HCT116 (cell line): ENCODE measurements at regions of chr19 and their contacts with region 1.

Region 1: DNA sequence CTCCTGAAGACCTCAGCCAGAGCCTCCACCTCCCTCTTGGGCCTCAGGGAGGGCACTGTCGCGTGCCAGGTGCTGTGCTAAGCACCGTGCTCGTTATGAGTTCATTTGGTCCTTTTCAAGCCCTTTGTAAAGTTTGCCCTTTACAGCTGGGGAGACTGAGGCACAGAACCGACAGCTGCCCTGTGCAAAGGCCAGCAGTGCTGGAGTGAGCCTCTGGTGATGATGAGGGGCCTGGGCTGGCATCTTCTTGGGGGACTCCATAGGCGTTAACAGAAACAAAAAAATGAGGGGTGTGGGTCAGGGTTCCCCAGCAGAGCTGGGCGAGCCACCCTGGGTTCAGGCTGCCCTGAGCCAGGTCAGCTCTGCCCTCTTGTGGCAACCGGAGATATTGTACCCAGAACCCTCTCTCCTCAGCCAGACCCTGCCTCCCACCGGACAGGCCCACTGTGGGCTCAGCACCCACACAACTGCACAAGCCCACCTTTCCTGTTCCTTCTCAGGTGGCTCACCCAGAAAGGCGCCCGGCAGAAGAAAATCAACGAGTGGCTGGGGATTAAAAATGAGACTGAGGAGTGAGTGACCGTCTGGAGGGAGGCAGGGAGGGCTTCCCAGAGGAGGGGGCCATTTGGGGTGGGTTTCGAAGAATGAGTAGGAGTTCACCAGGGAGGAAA is 5.5 kb upstream of the IFI30 start:
- DNase-seq: no peak
- ATAC-seq: peak; percentile 91
- H3K4me3 ChIP-seq: no peak overlapping the region
- H3K27ac ChIP-seq: no peak overlapping the region
- H3K4me1 ChIP-seq: peaks cover 0 to 2% of the 10 kb centered on the region in 2 experiments; a peak in 2 of 4 replicates
- H3K27me3 ChIP-seq: no peaks in the 10 kb centered on the region
- CTCF ChIP-seq: peak; percentile 58 to 82 (median 75)
- POLR2A ChIP-seq: no peak
- RAD21 ChIP-seq: peak; percentile 75

Region 2: DNA sequence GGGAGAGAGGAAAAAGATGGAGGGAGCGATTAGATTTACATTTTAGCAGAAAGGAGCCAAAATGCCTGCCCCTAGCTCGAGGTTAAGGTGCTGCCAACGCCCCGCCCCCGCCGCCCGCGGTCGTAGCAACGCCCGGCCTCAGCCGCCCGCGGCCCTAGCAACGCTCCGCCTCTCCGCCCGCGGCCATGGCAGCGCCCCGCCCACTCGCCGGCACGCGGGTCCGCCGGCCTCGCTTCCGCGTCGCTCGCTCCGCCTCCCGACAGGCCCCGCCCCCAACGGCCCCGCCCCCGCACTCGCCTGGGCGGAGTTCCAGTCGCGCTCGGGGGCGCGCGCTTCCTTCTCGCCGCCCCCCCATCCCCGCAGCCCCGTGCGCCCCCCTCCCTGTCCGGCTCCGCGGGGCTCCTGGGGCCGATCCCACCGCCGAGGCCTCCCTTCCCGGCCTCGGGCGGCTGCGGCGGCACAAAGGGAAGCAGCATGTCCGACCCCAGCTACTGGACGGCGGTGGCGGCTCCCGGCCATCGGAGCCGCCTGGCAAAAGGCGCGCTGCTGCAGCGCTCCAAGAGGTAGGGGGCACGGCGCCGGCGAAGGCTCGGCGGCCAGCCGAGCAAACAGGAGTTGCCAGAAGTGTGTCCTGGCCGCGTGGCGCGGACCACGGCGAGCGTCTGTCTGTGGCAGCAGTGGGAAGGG is 50.3 kb before region 1 on chr19:
- CTCF ChIA-PET with region 1: interaction called, 24 read pairs
- POLR2A ChIA-PET with region 1: no interaction called
- RAD21 ChIA-PET with region 1: interaction called, 3 to 8 read pairs
- intact Hi-C with region 1: loop called (anchors 1 kb)
- DNase-seq: peak; percentile 39
- ATAC-seq: peak; percentile 87
- H3K4me3 ChIP-seq: peak overlapping the region; percentile 65 to 84
- H3K27ac ChIP-seq: peak overlapping the region; percentile 57
- H3K4me1 ChIP-seq: peaks cover 8 to 21% of the 10 kb centered on the region in 2 experiments
- H3K27me3 ChIP-seq: no peaks in the 10 kb centered on the region
- CTCF ChIP-seq: no peak
- POLR2A ChIP-seq: no peak
- RAD21 ChIP-seq: no peak